ENCODE measurements at regions of chr7 and their contacts with region 1.

Region 1: GRCh38 chr7:108569381-108570145 is at the starts of genes DNAJB9 and THAP5:
- DNase-seq: peak; percentile 99
- H3K4me3 ChIP-seq: peak within 1 kb of the TSS; percentile 92
- H3K27ac ChIP-seq: peak within 1 kb of the TSS; percentile 85 to 88
- H3K4me1 ChIP-seq: peaks cover 2% of the 10 kb centered on the region
- H3K27me3 ChIP-seq: no peaks in the 10 kb centered on the region
- CTCF ChIP-seq: peak in 2 of 3 donors; percentile 18 to 54
- EP300 ChIP-seq: peak; percentile 88
- POLR2A ChIP-seq: peak; percentile 97
- total RNA-seq, gene DNAJB9: 17.5 to 44.2 (median 26.5) TPM
- total RNA-seq, gene THAP5: 18.2 to 44.5 (median 37.5) TPM

Region 2: GRCh38 chr7:108525985-108526767 is 43.4 kb before region 1 on chr7 and contains the start of gene PNPLA8:
- intact Hi-C with region 1: loop called in 2 of 4 experiments (anchors 1 to 2 kb)
- DNase-seq: peak; percentile 100
- H3K4me3 ChIP-seq: peak within 1 kb of the TSS; percentile 57
- H3K27ac ChIP-seq: peak within 1 kb of the TSS; percentile 94 to 98
- H3K4me1 ChIP-seq: peaks cover 4% of the 10 kb centered on the region
- H3K27me3 ChIP-seq: no peaks in the 10 kb centered on the region
- CTCF ChIP-seq: peak in 2 of 3 donors; percentile 18 to 28
- EP300 ChIP-seq: peak; percentile 98
- POLR2A ChIP-seq: peak; percentile 97
- total RNA-seq, gene PNPLA8: 21.2 to 39.7 (median 26.2) TPM

Measured in ovary (tissue), 10 donors.